ENCODE measurements at regions of chr12 and their contacts with region 1.

Region 1: GRCh38 chr12:108514973-108515814 is at the start of gene FICD:
- DNase-seq: peak; percentile 92
- ATAC-seq: peak; percentile 92
- H3K4me3 Mint-ChIP-seq: peak within 1 kb of the TSS; percentile 95
- H3K27ac Mint-ChIP-seq: peak within 1 kb of the TSS; percentile 84
- H3K4me1 Mint-ChIP-seq: peaks cover 36% of the 10 kb centered on the region
- H3K27me3 Mint-ChIP-seq: no peaks in the 10 kb centered on the region
- CTCF ChIP-seq: no peak
- total RNA-seq, gene FICD: 7.7 and 11.2 TPM in 2 replicates

Region 2: GRCh38 chr12:107685360-107686248 is 829.6 kb before region 1 on chr12 and contains the start of gene PWP1:
- CTCF ChIA-PET with region 1: interaction called, 3 read pairs
- POLR2A ChIA-PET with region 1: no interaction called
- intact Hi-C with region 1: loop called (anchors 5 kb)
- DNase-seq: peak; percentile 93
- ATAC-seq: peak; percentile 90
- H3K4me3 Mint-ChIP-seq: peak within 1 kb of the TSS; percentile 96
- H3K27ac Mint-ChIP-seq: peak within 1 kb of the TSS; percentile 97
- H3K4me1 Mint-ChIP-seq: peaks cover 23% of the 10 kb centered on the region
- H3K27me3 Mint-ChIP-seq: no peaks in the 10 kb centered on the region
- CTCF ChIP-seq: no peak
- total RNA-seq, gene PWP1: 49.4 and 53.5 TPM in 2 replicates

Region 3: DNA sequence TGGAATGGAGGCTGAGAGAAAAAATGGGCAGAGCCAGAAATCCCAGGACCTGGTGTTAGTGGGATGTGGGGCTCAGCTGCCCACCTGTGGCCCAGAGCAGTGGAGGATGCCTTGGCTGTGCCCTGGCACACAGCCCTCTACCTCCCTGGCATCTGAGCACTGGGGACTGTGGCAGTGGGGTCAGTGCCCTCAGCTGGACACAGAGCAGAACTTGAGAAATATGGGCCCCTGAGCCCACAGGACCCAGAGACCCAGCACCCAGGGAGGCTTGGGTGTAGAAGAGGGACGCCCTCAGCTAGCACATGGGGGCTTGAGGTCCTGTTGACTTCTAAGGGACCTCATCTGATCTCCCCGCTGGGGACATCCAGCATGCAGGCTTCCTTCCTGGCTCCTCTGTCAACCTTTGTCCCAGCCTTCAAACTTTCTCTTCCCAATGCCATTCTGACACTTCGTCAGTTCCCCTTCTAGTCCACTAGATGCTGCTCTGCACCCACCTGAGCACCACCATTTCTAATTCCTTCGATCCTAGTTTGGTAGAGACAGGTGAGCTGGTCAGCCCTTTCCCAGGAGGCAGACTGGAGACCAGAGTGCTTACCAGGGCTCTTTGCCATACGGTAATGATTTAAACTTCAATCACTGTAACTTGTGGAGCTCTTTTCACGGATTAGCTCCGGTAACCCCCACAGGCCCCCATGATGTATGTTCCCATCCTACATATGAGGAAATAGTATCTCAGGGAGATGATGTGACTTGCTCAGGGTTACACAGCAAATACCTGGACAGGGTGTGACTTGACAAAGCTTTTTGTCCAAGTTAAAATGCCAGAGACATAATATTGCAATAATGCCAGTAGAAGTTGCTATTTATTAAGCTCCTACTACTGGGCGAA is 597.0 kb before region 1 on chr12:
- CTCF ChIA-PET with region 1: interaction called, 10 read pairs
- POLR2A ChIA-PET with region 1: no interaction called
- intact Hi-C with region 1: loop called (anchors 1 kb)
- DNase-seq: no peak
- ATAC-seq: no peak
- H3K4me3 Mint-ChIP-seq: no peak overlapping the region
- H3K27ac Mint-ChIP-seq: no peak overlapping the region
- H3K4me1 Mint-ChIP-seq: peaks cover 2% of the 10 kb centered on the region
- H3K27me3 Mint-ChIP-seq: peaks cover 48% of the 10 kb centered on the region
- CTCF ChIP-seq: no peak

Region 4: DNA sequence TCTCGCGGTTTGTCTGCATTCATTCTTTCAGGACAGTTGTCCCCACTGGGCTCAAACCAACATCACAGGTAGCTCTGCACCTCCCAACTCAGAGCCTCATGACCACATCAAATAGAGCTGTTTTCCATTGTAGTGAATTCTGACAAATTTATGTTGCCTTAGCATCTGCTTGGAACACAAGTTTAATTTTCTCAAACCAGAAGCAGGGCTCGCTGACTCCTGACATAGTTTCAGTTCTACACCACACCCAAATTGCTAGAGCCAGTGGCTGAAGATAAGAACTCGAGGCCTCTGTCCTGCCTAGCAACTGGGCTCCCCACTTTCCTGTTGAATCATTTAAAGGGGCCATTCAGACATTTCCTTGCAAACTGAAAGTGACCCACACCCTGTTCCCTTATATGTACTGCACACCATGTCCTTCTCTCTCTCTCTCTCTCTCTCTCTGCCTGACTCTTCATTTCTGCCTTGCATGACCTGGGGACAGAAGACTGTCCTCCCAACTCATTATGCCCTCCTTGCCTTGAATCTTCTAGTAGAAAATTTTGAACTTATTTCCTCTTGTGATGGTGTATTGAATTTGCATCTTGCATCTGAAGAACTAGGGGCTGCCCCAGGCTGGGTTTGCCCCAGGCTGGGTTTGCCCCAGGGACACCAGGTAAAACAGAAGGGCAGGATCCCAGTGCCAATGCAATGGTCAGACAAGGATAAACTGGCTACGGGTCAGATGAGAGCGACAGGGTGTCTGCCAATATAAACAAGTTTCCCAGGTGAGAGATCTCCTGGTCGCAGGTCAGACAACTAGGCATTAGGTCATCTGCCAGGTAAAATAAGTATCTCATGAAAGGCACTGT is 395.8 kb before region 1 on chr12:
- CTCF ChIA-PET with region 1: interaction called, 3 read pairs
- POLR2A ChIA-PET with region 1: no interaction called
- intact Hi-C with region 1: loop called (anchors 5 kb)
- DNase-seq: no peak
- ATAC-seq: peak; percentile 77
- H3K4me3 Mint-ChIP-seq: peak overlapping the region; percentile 53
- H3K27ac Mint-ChIP-seq: peak overlapping the region; percentile 92
- H3K4me1 Mint-ChIP-seq: peaks cover 57% of the 10 kb centered on the region
- H3K27me3 Mint-ChIP-seq: no peaks in the 10 kb centered on the region
- CTCF ChIP-seq: no peak

Region 5: GRCh38 chr12:108399514-108399913 is 115.7 kb before region 1 on chr12:
- CTCF ChIA-PET with region 1: no interaction called
- POLR2A ChIA-PET with region 1: no interaction called
- intact Hi-C with region 1: no loop called
- DNase-seq: no peak
- ATAC-seq: no peak
- H3K4me3 Mint-ChIP-seq: no peak overlapping the region
- H3K27ac Mint-ChIP-seq: no peak overlapping the region
- H3K4me1 Mint-ChIP-seq: no peaks in the 10 kb centered on the region
- H3K27me3 Mint-ChIP-seq: peaks cover 9% of the 10 kb centered on the region
- CTCF ChIP-seq: no peak

Region 6: GRCh38 chr12:108618079-108618952 is 103.1 kb after region 1 on chr12:
- CTCF ChIA-PET with region 1: interaction called, 3 read pairs
- POLR2A ChIA-PET with region 1: no interaction called
- intact Hi-C with region 1: loop called (anchors 2 kb)
- DNase-seq: peak; percentile 76
- ATAC-seq: peak; percentile 40
- H3K4me3 Mint-ChIP-seq: peak overlapping the region; percentile 19
- H3K27ac Mint-ChIP-seq: peak overlapping the region; percentile 53
- H3K4me1 Mint-ChIP-seq: peaks cover 70% of the 10 kb centered on the region
- H3K27me3 Mint-ChIP-seq: no peaks in the 10 kb centered on the region
- CTCF ChIP-seq: peak; percentile 60

Region 7: DNA sequence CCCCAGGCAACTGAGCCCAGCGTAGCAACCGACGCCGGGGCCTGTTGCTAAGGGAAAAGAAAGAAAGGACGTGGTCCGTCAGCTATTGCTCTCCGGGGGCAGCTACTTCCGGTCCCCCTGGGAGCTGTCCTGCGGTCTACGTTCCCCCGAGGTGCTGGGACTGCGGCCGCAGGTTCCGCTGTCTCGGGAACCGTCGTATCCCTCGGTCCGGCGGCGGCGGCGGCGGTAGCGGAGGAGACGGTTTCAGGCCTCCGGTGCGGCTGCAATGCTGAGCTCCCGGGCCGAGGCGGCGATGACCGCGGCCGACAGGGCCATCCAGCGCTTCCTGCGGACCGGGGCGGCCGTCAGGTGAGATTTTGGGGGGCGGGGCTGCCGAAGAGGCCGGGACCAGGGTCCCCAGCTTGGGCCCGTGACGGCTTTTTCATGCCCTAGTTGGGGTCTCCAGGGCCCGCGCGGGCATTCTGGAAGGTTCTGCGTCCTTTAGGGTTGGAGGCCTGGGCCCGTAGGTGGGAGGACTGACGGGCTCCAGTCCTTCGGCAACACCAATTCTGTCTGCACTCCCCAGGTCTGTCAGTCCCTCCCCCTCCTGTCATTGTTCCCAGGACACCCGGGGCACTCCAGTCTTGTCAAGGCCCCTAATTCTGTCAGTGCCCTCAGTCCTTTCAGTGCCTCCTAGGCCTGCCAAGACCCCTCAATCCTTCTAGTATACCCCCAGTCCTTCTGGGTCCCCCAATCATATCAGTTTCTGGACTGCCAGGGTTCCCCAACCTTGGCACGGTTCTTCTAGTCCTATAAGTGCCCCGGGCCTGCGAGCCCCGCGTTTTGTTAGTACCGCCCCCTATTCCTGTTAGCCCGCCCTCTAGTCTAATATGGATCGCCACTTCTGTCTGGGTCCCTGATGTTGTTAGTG is 537.5 kb after region 1 on chr12 and contains the start of gene USP30:
- CTCF ChIA-PET with region 1: no interaction called
- POLR2A ChIA-PET with region 1: no interaction called
- intact Hi-C with region 1: loop called (anchors 1 kb)
- DNase-seq: peak; percentile 80
- ATAC-seq: peak; percentile 85
- H3K4me3 Mint-ChIP-seq: peak within 1 kb of the TSS; percentile 85
- H3K27ac Mint-ChIP-seq: peak within 1 kb of the TSS; percentile 86
- H3K4me1 Mint-ChIP-seq: peaks cover 22% of the 10 kb centered on the region
- H3K27me3 Mint-ChIP-seq: no peaks in the 10 kb centered on the region
- CTCF ChIP-seq: no peak
- total RNA-seq, gene USP30: 17.4 and 17.7 TPM in 2 replicates

Measured in activated B cell treated with CpG ODN at 0.5 μM for 24 hours (primary cell).